OCI-LY7 (cell line): ENCODE measurements at regions of chr7 and their contacts with region 1.

Region 1: DNA sequence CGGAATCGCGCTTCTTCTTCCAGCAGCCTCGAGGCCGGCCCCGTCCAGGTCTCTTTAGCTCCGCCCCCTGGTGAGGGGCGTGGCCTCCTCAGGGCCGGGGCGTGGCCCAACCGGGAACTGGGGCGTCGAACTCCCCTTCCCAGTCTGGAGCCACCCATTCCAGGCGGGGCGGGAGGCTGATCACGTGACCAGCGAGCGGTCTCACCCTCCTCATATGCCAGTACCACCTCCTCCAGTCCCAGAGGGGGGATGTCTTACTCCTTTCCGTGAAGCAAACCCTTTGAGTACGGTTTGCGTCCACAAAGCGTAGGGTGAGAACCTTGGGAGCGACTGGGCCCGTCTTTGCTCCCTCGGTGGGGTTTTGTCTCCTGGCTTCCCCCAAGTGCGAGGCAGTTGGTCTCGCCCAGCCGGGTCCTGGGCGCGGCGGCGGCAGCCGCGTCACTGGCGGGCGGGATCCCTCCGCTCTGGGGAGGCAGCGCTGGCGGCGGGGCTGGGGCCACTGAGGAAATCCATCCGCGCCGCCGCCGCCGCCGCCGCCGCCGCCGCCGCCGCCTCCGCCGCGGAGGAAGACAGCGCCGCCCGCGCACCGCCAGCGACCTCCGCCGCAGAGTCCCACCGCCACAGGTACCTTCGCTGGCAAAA is at the start of gene GNB2:
- DNase-seq: peak; percentile 98
- H3K4me3 ChIP-seq: peak within 1 kb of the TSS; percentile 99
- H3K27ac ChIP-seq: peak within 1 kb of the TSS; percentile 64
- H3K4me1 ChIP-seq: peaks cover 9% of the 10 kb centered on the region
- CTCF ChIP-seq: no peak
- total RNA-seq, gene GNB2: 59.4 and 80.4 TPM in 2 replicates

Region 2: GRCh38 chr7:100435401-100436304 is 237.8 kb before region 1 on chr7:
- CTCF ChIA-PET with region 1: interaction called, 3 read pairs
- POLR2A ChIA-PET with region 1: no interaction called
- intact Hi-C with region 1: loop called (anchors 2 kb)
- DNase-seq: peak; percentile 78
- H3K4me3 ChIP-seq: peak overlapping the region; percentile 90
- H3K27ac ChIP-seq: peak overlapping the region; percentile 84
- H3K4me1 ChIP-seq: peaks cover 51% of the 10 kb centered on the region
- CTCF ChIP-seq: no peak

Region 3: GRCh38 chr7:100478966-100479665 is 194.3 kb before region 1 on chr7 and contains the start of gene TSC22D4:
- CTCF ChIA-PET with region 1: interaction called, 3 read pairs
- POLR2A ChIA-PET with region 1: no interaction called
- intact Hi-C with region 1: loop called (anchors 10 kb)
- DNase-seq: peak; percentile 97
- H3K4me3 ChIP-seq: peak within 1 kb of the TSS; percentile 86
- H3K27ac ChIP-seq: peak within 1 kb of the TSS; percentile 75
- H3K4me1 ChIP-seq: peaks cover 40% of the 10 kb centered on the region
- CTCF ChIP-seq: no peak
- total RNA-seq, gene TSC22D4: 38.5 and 41.4 TPM in 2 replicates

Region 4: GRCh38 chr7:100604028-100604975 is 69.1 kb before region 1 on chr7:
- CTCF ChIA-PET with region 1: no interaction called
- POLR2A ChIA-PET with region 1: no interaction called
- intact Hi-C with region 1: loop called (anchors 1 kb)
- DNase-seq: peak; percentile 85
- H3K4me3 ChIP-seq: peak overlapping the region; percentile 76
- H3K27ac ChIP-seq: peak overlapping the region; percentile 39
- H3K4me1 ChIP-seq: peaks cover 13% of the 10 kb centered on the region
- CTCF ChIP-seq: peak; percentile 81

Region 5: GRCh38 chr7:100611974-100612729 is 61.3 kb before region 1 on chr7 and contains the start of gene MOSPD3:
- CTCF ChIA-PET with region 1: no interaction called
- POLR2A ChIA-PET with region 1: no interaction called
- intact Hi-C with region 1: loop called (anchors 2 kb)
- DNase-seq: peak; percentile 100
- H3K4me3 ChIP-seq: peak within 1 kb of the TSS; percentile 69
- H3K27ac ChIP-seq: peak within 1 kb of the TSS; percentile 76
- H3K4me1 ChIP-seq: peaks cover 9% of the 10 kb centered on the region
- CTCF ChIP-seq: no peak
- total RNA-seq, gene MOSPD3: 7.1 and 12.0 TPM in 2 replicates

Region 6: DNA sequence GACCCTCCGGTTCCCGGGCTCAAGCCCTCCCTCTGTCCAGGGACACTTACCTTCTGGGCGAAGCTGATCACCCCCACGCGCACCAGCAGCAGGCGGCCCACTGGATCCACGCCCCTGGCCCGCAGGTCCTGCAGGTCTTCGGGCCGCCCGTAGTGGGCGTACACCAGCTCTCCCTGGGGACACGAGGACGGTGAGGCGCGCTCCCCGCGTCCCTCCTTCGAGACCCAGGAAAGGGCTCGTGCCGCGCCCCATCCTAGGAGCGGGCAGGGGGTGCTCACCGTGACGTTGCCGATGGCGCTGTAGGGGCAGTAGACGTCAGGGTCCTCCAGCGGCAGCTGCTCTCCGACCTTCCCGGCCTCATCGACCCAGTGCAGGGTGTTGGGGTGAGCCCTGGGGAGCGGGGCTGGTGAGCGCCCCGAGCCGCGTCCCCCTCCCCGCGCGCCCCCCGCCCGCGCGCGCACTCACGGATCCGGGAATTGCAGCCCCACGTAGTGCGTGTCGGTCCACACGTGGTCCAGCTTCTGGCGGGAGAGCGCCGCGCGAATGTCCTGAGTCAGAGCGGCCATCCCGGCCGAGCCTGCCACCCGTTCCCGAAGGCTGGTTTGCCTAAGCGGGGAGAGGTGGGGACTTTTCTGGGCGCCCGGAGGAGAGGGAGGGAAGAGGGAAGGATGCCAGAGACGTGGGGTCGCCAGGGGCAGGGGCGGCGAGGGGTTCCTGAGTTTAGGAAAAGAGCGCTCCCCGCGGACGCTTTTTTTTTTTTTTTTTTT is 40.3 kb before region 1 on chr7:
- CTCF ChIA-PET with region 1: interaction called, 16 read pairs
- POLR2A ChIA-PET with region 1: no interaction called
- intact Hi-C with region 1: loop called (anchors 1 kb)
- DNase-seq: peak; percentile 84
- H3K4me3 ChIP-seq: peak overlapping the region; percentile 73
- H3K27ac ChIP-seq: peak overlapping the region; percentile 44
- H3K4me1 ChIP-seq: peaks cover 7% of the 10 kb centered on the region
- CTCF ChIP-seq: peak; percentile 64